A549 (cell line): ENCODE measurements at regions of chr9 and their contacts with region 1.

Region 1: GRCh38 chr9:133184962-133185361 is 21.2 kb upstream of the GBGT1 start:
- DNase-seq: peak; percentile 71 to 76
- ATAC-seq: peak; percentile 75 to 82
- H3K4me3 ChIP-seq: no peak overlapping the region
- H3K27ac ChIP-seq: no peak overlapping the region
- H3K4me1 ChIP-seq: 0 out of 3 replicates have a peak, but pooled peaks cover 3% of the 10 kb centered on the region
- CTCF ChIP-seq: peak; percentile 58
- EP300 ChIP-seq: no peak
- POLR2A ChIP-seq: no peak
- RAD21 ChIP-seq: peak; percentile 64 to 72

Region 2: GRCh38 chr9:133149126-133150107 is 35.5 kb before region 1 on chr9:
- CTCF ChIA-PET with region 1: interaction called, 24 read pairs
- POLR2A ChIA-PET with region 1: no interaction called
- DNase-seq: peak; percentile 93 to 96
- ATAC-seq: peak; percentile 71 to 76
- H3K4me3 ChIP-seq: peak overlapping the region; percentile 77
- H3K27ac ChIP-seq: peak overlapping the region; percentile 88 to 96
- H3K4me1 ChIP-seq: peaks cover 25% of the 10 kb centered on the region
- CTCF ChIP-seq: peak; percentile 23; the same call in 2 of the 3 replicates
- EP300 ChIP-seq: no peak
- POLR2A ChIP-seq: peak; percentile 52
- RAD21 ChIP-seq: peak in 1 of 2 experiments; percentile 41; a peak in 3 of 5 replicates

Region 3: GRCh38 chr9:133170716-133171559 is 14.0 kb before region 1 on chr9:
- CTCF ChIA-PET with region 1: interaction called, 89 read pairs
- POLR2A ChIA-PET with region 1: no interaction called
- DNase-seq: no peak
- ATAC-seq: peak in 1 of 2 experiments; percentile 19; a peak in 1 of 6 replicates
- H3K4me3 ChIP-seq: no peak overlapping the region
- H3K27ac ChIP-seq: no peak overlapping the region
- H3K4me1 ChIP-seq: peaks cover 25% of the 10 kb centered on the region
- CTCF ChIP-seq: no peak
- EP300 ChIP-seq: no peak
- POLR2A ChIP-seq: no peak
- RAD21 ChIP-seq: no peak

Region 4: GRCh38 chr9:133327834-133328484 is 143.0 kb after region 1 on chr9:
- CTCF ChIA-PET with region 1: interaction called, 82 read pairs
- POLR2A ChIA-PET with region 1: no interaction called
- DNase-seq: no peak
- ATAC-seq: peak in 1 of 2 experiments; percentile 17; a peak in 2 of 6 replicates
- H3K4me3 ChIP-seq: no peak overlapping the region
- H3K27ac ChIP-seq: no peak overlapping the region
- H3K4me1 ChIP-seq: no peaks in the 10 kb centered on the region
- CTCF ChIP-seq: no peak
- EP300 ChIP-seq: no peak
- POLR2A ChIP-seq: no peak
- RAD21 ChIP-seq: no peak

Region 5: GRCh38 chr9:133347985-133348717 is 163.2 kb after region 1 on chr9 and contains the starts of genes MED22 and RPL7A:
- CTCF ChIA-PET with region 1: interaction called, 5 read pairs
- POLR2A ChIA-PET with region 1: interaction called, 14 read pairs
- DNase-seq: peak; percentile 90 to 96
- ATAC-seq: peak; percentile 74 to 83
- H3K4me3 ChIP-seq: peak within 1 kb of the TSS; percentile 100
- H3K27ac ChIP-seq: peak within 1 kb of the TSS; percentile 98 to 99
- H3K4me1 ChIP-seq: peaks cover 19% of the 10 kb centered on the region
- CTCF ChIP-seq: no peak
- EP300 ChIP-seq: no peak
- POLR2A ChIP-seq: peak; percentile 99
- RAD21 ChIP-seq: no peak
- polyA plus RNA-seq, gene MED22: 15.7 and 18.4 TPM in 2 replicates
- polyA plus RNA-seq, gene RPL7A: 2,218 and 2,405 TPM in 2 replicates